ENCODE measurements at regions of chr12 and their contacts with region 1.

Region 1: GRCh38 chr12:2812290-2813213 is at the start of gene ITFG2:
- DNase-seq: peak; percentile 99
- H3K4me3 ChIP-seq: peak within 1 kb of the TSS; percentile 61
- CTCF ChIP-seq: peak in 1 of 3 donors; percentile 43
- POLR2A ChIP-seq: no peak
- total RNA-seq, gene ITFG2: 13.9 to 36.1 (median 27.5) TPM

Region 2: GRCh38 chr12:1429980-1430379 is 1382.6 kb before region 1 on chr12:
- intact Hi-C with region 1: no loop called
- DNase-seq: no peak
- H3K4me3 ChIP-seq: no peak overlapping the region
- CTCF ChIP-seq: no peak
- POLR2A ChIP-seq: no peak

Region 3: DNA sequence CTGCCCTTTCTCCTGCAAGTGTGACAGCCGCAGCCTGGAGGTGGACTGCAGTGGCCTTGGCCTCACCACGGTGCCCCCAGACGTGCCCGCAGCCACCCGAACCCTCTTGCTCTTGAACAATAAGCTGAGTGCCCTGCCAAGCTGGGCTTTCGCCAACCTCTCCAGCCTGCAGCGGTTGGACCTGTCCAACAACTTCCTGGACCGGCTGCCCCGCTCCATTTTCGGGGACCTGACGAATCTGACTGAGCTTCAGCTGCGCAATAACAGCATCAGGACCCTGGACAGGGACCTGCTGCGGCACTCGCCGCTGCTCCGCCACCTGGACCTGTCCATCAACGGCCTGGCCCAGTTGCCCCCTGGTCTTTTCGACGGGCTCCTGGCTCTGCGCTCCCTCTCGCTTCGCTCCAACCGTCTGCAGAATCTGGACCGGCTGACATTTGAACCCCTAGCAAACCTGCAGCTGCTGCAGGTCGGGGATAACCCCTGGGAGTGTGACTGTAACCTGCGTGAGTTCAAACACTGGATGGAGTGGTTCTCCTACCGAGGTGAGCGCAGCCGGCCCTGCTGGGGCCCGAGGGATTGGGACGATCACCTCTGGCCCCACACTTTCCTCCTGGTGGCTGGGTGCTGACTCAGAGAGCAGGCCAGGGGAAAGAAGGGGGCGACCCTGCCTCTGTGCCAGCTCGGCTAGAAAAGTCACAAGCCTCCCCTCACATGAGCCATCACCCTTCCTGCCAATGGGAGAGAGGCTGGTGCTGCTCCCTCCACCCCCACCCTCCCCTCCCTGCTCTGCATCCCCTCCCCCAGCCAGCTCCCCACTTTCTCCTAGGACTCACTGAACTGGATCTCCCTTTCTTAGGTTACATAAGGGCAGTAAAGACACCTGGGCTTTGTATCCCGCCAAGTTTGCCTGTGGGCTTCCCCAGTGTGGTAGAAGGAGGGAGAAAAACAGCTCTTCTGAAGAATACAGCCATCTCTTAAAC is 981.3 kb before region 1 on chr12:
- intact Hi-C with region 1: loop called (anchors 5 kb)
- DNase-seq: no peak
- H3K4me3 ChIP-seq: no peak overlapping the region
- CTCF ChIP-seq: no peak
- POLR2A ChIP-seq: no peak

Region 4: GRCh38 chr12:2722806-2723205 is 89.7 kb before region 1 on chr12:
- intact Hi-C with region 1: no loop called
- DNase-seq: no peak
- H3K4me3 ChIP-seq: no peak overlapping the region
- CTCF ChIP-seq: no peak
- POLR2A ChIP-seq: no peak